ENCODE measurements at regions of chr12 and their contacts with region 1.

Region 1: GRCh38 chr12:71663561-71664294 is at the start of gene ZFC3H1:
- DNase-seq: peak; percentile 94 to 97
- H3K4me3 ChIP-seq: peak within 1 kb of the TSS; percentile 93
- H3K4me3 Mint-ChIP-seq: peak within 1 kb of the TSS; percentile 98
- H3K27ac Mint-ChIP-seq: peak within 1 kb of the TSS; percentile 99
- H3K4me1 ChIP-seq: peaks cover 11% of the 10 kb centered on the region; the same call in 1 of the 2 replicates
- H3K4me1 Mint-ChIP-seq: peaks cover 12% of the 10 kb centered on the region
- H3K27me3 ChIP-seq: no peaks in the 10 kb centered on the region
- H3K27me3 Mint-ChIP-seq: no peaks in the 10 kb centered on the region
- CTCF ChIP-seq: peak in 1 of 2 experiments; percentile 34
- total RNA-seq, gene ZFC3H1: 48.7 and 50.7 TPM in 2 replicates

Region 2: GRCh38 chr12:71642264-71642663 is 21.5 kb before region 1 on chr12:
- CTCF ChIA-PET with region 1: no interaction called
- POLR2A ChIA-PET with region 1: interaction called, 4 read pairs
- intact Hi-C with region 1: loop called (anchors 1 kb)
- DNase-seq: peak in 1 of 2 experiments; percentile 76
- H3K4me3 ChIP-seq: no peak overlapping the region
- H3K4me3 Mint-ChIP-seq: peak overlapping the region; percentile 55
- H3K27ac Mint-ChIP-seq: peak overlapping the region; percentile 93
- H3K4me1 ChIP-seq: peaks cover 26% of the 10 kb centered on the region
- H3K4me1 Mint-ChIP-seq: peaks cover 23% of the 10 kb centered on the region
- H3K27me3 ChIP-seq: no peaks in the 10 kb centered on the region
- H3K27me3 Mint-ChIP-seq: no peaks in the 10 kb centered on the region
- CTCF ChIP-seq: no peak

Region 3: GRCh38 chr12:71685914-71686665 is 22.4 kb after region 1 on chr12 and contains the start of gene TMEM19:
- CTCF ChIA-PET with region 1: interaction called, 16 read pairs
- POLR2A ChIA-PET with region 1: interaction called, 49 read pairs
- intact Hi-C with region 1: loop called (anchors 1 kb)
- DNase-seq: peak; percentile 89 to 91
- H3K4me3 ChIP-seq: peak within 1 kb of the TSS; percentile 46
- H3K4me3 Mint-ChIP-seq: peak within 1 kb of the TSS; percentile 97
- H3K27ac Mint-ChIP-seq: peak within 1 kb of the TSS; percentile 93
- H3K4me1 ChIP-seq: no peaks in the 10 kb centered on the region
- H3K4me1 Mint-ChIP-seq: no peaks in the 10 kb centered on the region
- H3K27me3 ChIP-seq: no peaks in the 10 kb centered on the region
- H3K27me3 Mint-ChIP-seq: no peaks in the 10 kb centered on the region
- CTCF ChIP-seq: peak in 1 of 2 experiments; percentile 39
- total RNA-seq, gene TMEM19: 17.8 and 24.2 TPM in 2 replicates

Region 4: GRCh38 chr12:71710276-71711125 is 46.8 kb after region 1 on chr12:
- CTCF ChIA-PET with region 1: no interaction called
- POLR2A ChIA-PET with region 1: no interaction called
- intact Hi-C with region 1: no loop called
- DNase-seq: peak; percentile 47 to 53
- H3K4me3 ChIP-seq: no peak overlapping the region
- H3K4me3 Mint-ChIP-seq: peak overlapping the region; percentile 2
- H3K27ac Mint-ChIP-seq: peak overlapping the region; percentile 46
- H3K4me1 ChIP-seq: peaks cover 12% of the 10 kb centered on the region
- H3K4me1 Mint-ChIP-seq: peaks cover 17% of the 10 kb centered on the region
- H3K27me3 ChIP-seq: no peaks in the 10 kb centered on the region
- H3K27me3 Mint-ChIP-seq: no peaks in the 10 kb centered on the region
- CTCF ChIP-seq: no peak

Region 5: DNA sequence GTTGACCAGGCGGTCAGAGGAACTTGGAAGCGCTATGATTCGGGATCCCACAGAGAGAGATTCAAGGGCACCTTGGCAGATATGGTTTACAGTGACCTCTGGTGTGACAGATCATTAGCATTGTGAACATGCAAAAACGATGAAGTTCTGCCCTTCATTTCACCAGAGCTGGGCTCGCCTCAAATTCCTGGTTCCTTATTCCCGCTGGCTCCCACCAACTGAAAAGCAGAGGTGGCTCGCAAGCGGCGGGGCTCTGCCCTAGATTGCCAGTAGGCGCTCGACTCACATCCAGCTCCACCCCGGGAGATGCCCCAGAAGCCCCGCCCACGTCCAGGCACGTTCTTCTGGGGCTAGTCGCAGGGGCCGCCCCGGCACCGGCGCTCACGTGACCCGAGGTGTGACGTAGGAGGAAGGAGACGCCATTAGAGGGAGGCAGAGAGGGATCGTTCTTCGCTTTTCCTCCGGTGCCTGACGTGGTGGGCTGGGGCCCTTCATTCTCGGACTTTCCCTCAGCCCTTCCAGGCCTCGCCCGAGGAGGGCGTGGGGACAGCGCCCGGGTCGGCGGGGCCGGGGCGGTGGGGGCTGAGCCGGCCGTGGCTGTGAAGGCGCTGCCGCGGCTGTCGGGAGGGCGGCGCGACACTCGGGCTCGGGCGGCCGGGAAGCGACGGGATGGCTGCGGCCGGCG is 90.9 kb after region 1 on chr12 and contains the start of gene RAB21:
- CTCF ChIA-PET with region 1: no interaction called
- POLR2A ChIA-PET with region 1: interaction called, 9 read pairs
- intact Hi-C with region 1: loop called (anchors 1 kb)
- DNase-seq: peak; percentile 97
- H3K4me3 ChIP-seq: peak within 1 kb of the TSS; percentile 81
- H3K4me3 Mint-ChIP-seq: peak within 1 kb of the TSS; percentile 86
- H3K27ac Mint-ChIP-seq: peak within 1 kb of the TSS; percentile 96
- H3K4me1 ChIP-seq: peaks cover 8% of the 10 kb centered on the region; the same call in 1 of the 2 replicates
- H3K4me1 Mint-ChIP-seq: peaks cover 12% of the 10 kb centered on the region
- H3K27me3 ChIP-seq: no peaks in the 10 kb centered on the region
- H3K27me3 Mint-ChIP-seq: peaks cover 5% of the 10 kb centered on the region
- CTCF ChIP-seq: peak in 1 of 2 experiments; percentile 22
- total RNA-seq, gene RAB21: 69.6 and 72.0 TPM in 2 replicates